HCT116 (cell line): ENCODE measurements at regions of chr4 and their contacts with region 1.

Region 1: DNA sequence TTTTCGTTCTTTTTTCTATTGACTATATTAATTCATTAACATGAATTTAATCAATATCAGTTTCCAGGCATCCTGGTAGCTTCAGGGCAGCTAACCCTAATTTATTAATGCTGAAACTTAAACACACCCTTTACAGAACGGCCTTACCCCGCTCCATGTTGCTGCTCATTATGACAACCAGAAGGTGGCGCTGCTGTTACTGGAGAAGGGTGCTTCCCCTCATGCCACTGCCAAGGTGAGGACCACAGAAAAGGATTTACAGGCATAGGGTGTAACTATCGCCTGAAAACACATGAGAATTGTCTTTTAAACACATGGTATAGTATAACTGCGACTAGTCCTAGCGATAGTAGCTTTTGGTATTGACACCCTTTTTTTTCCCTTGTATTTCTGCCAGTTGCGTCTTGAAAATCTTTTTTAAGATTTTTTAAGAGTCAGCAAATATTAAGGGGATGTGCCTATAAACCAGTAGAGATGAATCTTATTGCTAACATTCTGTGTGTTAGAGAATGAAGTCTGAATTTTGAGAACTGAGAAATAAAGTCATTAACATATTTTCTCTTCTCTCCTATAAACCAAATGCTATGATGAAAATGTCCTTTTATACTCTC is 229.0 kb downstream of the ANK2 start:
- DNase-seq: peak; percentile 76
- ATAC-seq: peak; percentile 100
- H3K4me3 ChIP-seq: no peak overlapping the region
- H3K27ac ChIP-seq: no peak overlapping the region
- H3K4me1 ChIP-seq: no peaks in the 10 kb centered on the region
- H3K27me3 ChIP-seq: no peaks in the 10 kb centered on the region
- CTCF ChIP-seq: peak; percentile 71 to 95 (median 94); a peak in 5 of 6 replicates
- POLR2A ChIP-seq: no peak
- RAD21 ChIP-seq: peak; percentile 90

Region 2: DNA sequence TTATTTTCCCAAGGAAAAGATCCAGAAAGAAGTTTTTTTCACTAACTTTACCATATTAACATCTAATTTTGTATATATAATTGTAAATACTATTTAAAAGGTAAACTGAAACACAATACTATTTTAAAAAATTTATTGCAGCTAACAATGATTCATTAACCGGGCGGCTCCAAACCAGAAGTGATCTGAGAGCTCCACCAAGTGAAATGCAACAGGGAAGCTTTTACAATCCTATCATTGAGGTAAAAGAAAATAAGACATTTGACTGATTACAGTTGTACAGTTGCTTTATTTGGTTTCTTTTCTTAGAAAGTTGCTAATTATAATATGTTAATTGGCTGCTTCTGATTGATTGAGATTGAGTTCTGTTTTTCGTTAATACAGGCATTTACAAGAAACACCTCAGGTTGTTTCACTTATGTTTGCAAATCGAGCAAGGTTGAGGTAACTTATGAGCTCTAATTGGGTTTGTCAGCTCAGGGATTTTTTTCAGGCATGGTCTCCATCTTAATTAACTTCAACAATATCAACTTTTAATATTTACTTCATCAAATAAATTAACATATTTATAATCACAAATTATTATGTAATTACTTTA is 1100.0 kb after region 1 on chr4:
- CTCF ChIA-PET with region 1: no interaction called
- POLR2A ChIA-PET with region 1: no interaction called
- RAD21 ChIA-PET with region 1: no interaction called
- intact Hi-C with region 1: loop called (anchors 2 kb)
- DNase-seq: no peak
- ATAC-seq: no peak
- H3K4me3 ChIP-seq: no peak overlapping the region
- H3K27ac ChIP-seq: no peak overlapping the region
- H3K4me1 ChIP-seq: peaks cover 0 to 1% of the 10 kb centered on the region in 2 experiments; a peak in 1 of 4 replicates
- H3K27me3 ChIP-seq: no peaks in the 10 kb centered on the region
- CTCF ChIP-seq: peak; percentile 18 to 64 (median 46); a peak in 3 of 6 replicates
- POLR2A ChIP-seq: no peak
- RAD21 ChIP-seq: peak; percentile 80